ENCODE measurements at regions of chr1 and their contacts with region 1.

Region 1: DNA sequence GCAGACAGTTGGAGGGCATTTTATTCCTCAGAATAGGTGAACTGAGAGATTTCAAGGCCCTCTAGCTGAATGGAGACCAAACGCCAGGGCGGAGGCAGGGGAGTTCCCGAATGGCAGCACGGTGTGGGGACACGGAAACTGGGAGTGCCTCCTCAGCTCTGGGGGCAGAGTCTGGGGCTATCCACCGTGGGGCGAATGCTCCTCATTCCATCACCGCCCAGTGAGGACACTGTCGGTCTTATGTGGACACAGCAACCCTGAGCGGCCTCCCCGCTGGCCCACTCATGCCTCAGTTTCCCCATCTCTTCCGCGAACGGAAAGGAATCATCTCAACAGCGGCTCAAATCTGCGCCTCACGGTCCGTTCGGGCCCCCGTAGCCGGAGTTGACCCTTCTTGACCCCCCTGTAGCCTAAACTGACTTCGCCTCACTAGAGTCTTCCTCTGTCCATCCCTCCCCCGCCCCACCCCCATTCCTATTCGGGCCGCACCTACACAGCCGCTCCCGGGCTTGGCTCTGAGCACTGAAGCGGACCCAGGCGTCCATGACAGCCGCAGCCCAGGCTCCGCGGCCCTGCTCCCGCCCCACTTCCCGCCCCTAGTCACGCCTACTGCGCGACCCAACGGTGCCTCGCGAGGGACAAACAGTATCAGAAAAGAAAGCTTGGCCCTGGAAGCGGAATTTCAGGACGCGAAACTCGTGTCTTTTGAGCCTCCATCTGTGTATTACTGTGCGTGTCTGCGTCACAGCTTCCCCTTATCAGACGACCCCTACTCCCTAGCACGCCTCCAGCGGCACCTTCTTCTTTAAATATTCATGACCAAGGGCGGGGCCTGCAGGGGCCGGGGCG is at the start of gene PEX11B:
- DNase-seq: peak; percentile 96
- H3K4me3 ChIP-seq: peak within 1 kb of the TSS; percentile 45 to 77 (median 62)
- H3K27ac ChIP-seq: peak within 1 kb of the TSS; percentile 19
- H3K4me1 ChIP-seq: peaks cover 16% of the 10 kb centered on the region
- H3K27me3 ChIP-seq: no peaks in the 10 kb centered on the region
- CTCF ChIP-seq: no peak
- POLR2A ChIP-seq: peak; percentile 63
- total RNA-seq, gene PEX11B: 29.0 and 30.5 TPM in 2 replicates

Region 2: DNA sequence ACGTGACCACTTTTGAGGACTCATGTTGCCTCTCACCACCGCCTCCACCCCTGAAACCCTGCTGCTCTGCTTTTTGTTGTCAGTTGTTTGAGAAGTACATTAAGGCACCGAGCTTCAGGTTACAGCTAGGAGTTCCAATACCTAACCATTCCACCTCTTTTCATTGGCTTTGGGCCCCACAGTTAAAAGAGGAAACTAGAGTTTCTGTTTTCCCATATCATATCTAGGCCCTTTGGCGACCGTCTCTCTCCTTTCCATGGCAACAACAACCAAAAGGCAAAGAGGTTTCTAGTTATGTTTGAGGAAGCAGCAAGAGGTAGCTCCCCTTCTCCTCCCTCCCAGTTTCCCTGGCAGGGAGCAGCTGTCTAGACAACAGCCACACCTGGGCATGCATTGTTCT is 38.6 kb before region 1 on chr1:
- CTCF ChIA-PET with region 1: no interaction called
- POLR2A ChIA-PET with region 1: no interaction called
- dilution Hi-C with region 1: no loop called
- intact Hi-C with region 1: no loop called
- DNase-seq: no peak
- H3K4me3 ChIP-seq: no peak overlapping the region
- H3K27ac ChIP-seq: no peak overlapping the region
- H3K4me1 ChIP-seq: peaks cover 6% of the 10 kb centered on the region
- H3K27me3 ChIP-seq: peaks cover 2 to 3% of the 10 kb centered on the region in 2 experiments
- CTCF ChIP-seq: no peak
- POLR2A ChIP-seq: no peak

Region 3: DNA sequence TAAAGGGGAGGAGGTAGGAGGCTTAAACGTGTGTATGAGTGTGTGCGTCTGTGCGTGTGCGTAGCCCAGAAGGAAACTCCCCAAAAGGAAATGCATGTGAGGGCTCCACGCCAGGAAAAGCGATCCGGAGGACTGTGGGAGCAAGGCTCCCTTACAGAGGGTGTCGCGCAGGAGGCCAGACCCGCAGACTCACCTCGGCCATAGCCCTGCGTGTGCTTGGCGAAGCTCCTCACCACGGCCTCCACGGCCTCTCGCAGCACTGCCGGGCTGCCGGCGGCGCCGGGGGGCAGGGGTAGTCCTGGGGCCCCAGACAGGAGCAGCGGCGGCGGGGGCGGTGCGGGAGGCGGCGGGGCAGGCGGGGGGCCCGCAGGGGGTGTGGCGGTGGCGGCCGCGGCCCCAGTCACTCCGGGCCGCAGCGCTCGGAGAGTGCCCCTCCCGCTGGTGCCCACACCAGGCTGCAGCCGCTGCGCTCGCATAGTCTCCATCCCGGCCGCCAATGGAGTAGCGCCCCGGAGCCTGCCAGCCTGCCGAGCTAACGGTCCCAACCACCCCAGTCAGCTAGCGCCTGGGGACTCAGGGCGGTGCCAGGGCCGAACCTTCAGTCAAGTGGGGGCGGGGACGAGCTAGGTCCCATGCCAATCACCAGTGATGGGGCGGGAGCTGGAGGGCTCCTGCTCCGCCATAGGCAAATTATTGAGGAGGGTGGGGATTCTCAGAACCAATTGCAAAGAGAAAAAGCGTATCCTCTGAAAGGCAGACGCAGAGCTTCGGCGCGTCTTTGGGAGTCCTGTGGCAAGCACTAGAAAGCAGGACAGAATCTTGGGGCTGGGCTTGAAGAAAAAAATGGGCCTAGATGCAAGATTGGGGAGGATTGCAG is 39.3 kb after region 1 on chr1 and contains the start of gene LIX1L:
- CTCF ChIA-PET with region 1: interaction called, 6 read pairs
- POLR2A ChIA-PET with region 1: interaction called, 3 read pairs
- dilution Hi-C with region 1: no loop called
- intact Hi-C with region 1: loop called (anchors 2 kb)
- DNase-seq: peak; percentile 97
- H3K4me3 ChIP-seq: peak within 1 kb of the TSS; percentile 71 to 87 (median 74)
- H3K27ac ChIP-seq: peak within 1 kb of the TSS; percentile 96
- H3K4me1 ChIP-seq: peaks cover 50% of the 10 kb centered on the region
- H3K27me3 ChIP-seq: no peaks in the 10 kb centered on the region
- CTCF ChIP-seq: no peak
- POLR2A ChIP-seq: peak; percentile 98
- total RNA-seq, gene LIX1L: 54.9 and 55.6 TPM in 2 replicates